PC-9 (cell line): ENCODE measurements at regions of chr10 and their contacts with region 1.

Region 1: DNA sequence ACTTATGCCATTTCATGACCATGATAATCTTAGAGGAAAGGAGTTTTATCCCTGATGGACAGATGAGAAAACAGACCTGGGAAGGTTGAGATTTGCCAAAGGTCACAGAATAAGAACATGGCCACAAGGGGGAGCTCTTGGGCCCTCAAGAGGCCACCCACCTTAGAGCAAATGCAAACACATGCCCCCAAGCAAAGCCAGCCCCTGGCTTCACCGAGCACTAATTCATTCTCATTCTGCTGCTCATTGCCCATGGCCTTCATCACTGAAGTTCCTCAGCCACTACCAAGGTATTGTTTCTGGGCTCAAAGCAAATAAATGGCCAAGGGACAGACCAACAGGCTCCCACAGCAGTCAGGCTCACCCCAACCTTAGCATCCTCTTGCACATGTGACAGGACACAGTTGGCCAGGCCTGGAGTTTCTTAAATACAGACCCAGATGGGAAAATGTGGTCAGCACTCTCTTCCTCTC is 44.2 kb downstream of the PDLIM1 start:
- DNase-seq: peak; percentile 52 to 56
- H3K4me3 ChIP-seq: no peak overlapping the region
- H3K27ac ChIP-seq: peak overlapping the region; percentile 46; the same call in 1 of the 2 replicates
- H3K4me1 ChIP-seq: peaks cover 15% of the 10 kb centered on the region; the same call in 1 of the 2 replicates
- H3K27me3 ChIP-seq: no peaks in the 10 kb centered on the region
- CTCF ChIP-seq: peak; percentile 84

Region 2: DNA sequence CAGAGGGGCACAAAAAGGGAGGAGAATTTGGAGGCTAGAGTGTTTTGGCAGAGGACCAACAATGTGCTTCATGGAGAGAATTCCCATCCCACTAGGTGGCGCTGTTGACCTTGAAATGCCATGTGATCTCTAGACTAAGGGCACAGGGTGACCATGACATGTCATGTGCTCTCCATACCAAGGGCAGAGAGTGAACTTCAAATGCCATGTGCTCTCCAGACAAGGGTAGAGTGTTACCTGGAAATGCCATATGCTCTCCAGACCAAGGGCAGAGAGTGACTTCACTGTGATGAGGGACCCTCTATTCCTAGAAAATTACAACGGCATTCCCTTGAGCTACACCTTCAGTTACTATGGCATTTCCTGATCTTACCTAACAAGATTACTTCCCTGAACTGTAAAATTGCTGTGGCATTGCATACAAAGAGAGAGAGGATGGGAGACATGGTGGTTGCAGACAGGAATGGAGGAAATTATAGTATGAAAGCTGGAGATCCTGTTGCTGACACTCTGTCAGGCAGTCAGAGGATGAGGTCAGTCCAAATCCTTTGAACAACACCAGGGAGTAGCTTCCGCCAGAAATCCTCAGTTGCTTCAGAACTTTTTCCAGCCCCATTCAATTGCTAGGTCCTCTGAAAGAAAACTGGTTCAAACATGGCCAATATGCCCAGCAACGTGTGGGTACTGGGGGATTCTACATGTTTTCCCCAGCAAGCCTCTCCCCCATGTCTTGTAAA is 113.4 kb before region 1 on chr10:
- CTCF ChIA-PET with region 1: no interaction called
- POLR2A ChIA-PET with region 1: no interaction called
- intact Hi-C with region 1: loop called (anchors 1 kb)
- DNase-seq: peak; percentile 54 to 56
- H3K4me3 ChIP-seq: no peak overlapping the region
- H3K27ac ChIP-seq: no peak overlapping the region
- H3K4me1 ChIP-seq: no peaks in the 10 kb centered on the region
- H3K27me3 ChIP-seq: no peaks in the 10 kb centered on the region
- CTCF ChIP-seq: peak; percentile 82

Region 3: GRCh38 chr10:95201736-95202135 is 44.9 kb before region 1 on chr10:
- CTCF ChIA-PET with region 1: interaction called, 25 read pairs
- POLR2A ChIA-PET with region 1: interaction called, 3 read pairs
- intact Hi-C with region 1: loop called (anchors 1 kb)
- DNase-seq: peak; percentile 49 to 71
- H3K4me3 ChIP-seq: no peak overlapping the region
- H3K27ac ChIP-seq: no peak overlapping the region
- H3K4me1 ChIP-seq: no peaks in the 10 kb centered on the region
- H3K27me3 ChIP-seq: no peaks in the 10 kb centered on the region
- CTCF ChIP-seq: peak; percentile 58

Region 4: GRCh38 chr10:95266674-95267095 is 20.1 kb after region 1 on chr10:
- CTCF ChIA-PET with region 1: no interaction called
- POLR2A ChIA-PET with region 1: no interaction called
- intact Hi-C with region 1: loop called (anchors 2 kb)
- DNase-seq: peak in 1 of 2 experiments; percentile 97
- H3K4me3 ChIP-seq: no peak overlapping the region
- H3K27ac ChIP-seq: peak overlapping the region; percentile 97
- H3K4me1 ChIP-seq: peaks cover 60% of the 10 kb centered on the region
- H3K27me3 ChIP-seq: no peaks in the 10 kb centered on the region
- CTCF ChIP-seq: no peak

Region 5: GRCh38 chr10:95363303-95363912 is 116.8 kb after region 1 on chr10:
- CTCF ChIA-PET with region 1: interaction called, 3 read pairs
- POLR2A ChIA-PET with region 1: no interaction called
- intact Hi-C with region 1: loop called (anchors 1 kb)
- DNase-seq: peak; percentile 33 to 43
- H3K4me3 ChIP-seq: no peak overlapping the region
- H3K27ac ChIP-seq: no peak overlapping the region
- H3K4me1 ChIP-seq: no peaks in the 10 kb centered on the region
- H3K27me3 ChIP-seq: no peaks in the 10 kb centered on the region
- CTCF ChIP-seq: peak; percentile 88